PC-9 (cell line): ENCODE measurements at regions of chr1 and their contacts with region 1.

Region 1: GRCh38 chr1:40849801-40850592 is 12.2 kb downstream of the CITED4 start:
- DNase-seq: peak in 1 of 2 experiments; percentile 78
- H3K4me3 ChIP-seq: no peak overlapping the region
- H3K27ac ChIP-seq: no peak overlapping the region
- H3K4me1 ChIP-seq: no peaks in the 10 kb centered on the region
- H3K27me3 ChIP-seq: no peaks in the 10 kb centered on the region
- CTCF ChIP-seq: peak; percentile 93

Region 2: GRCh38 chr1:39842836-39843235 is 1007.2 kb before region 1 on chr1:
- CTCF ChIA-PET with region 1: no interaction called
- POLR2A ChIA-PET with region 1: no interaction called
- intact Hi-C with region 1: no loop called
- DNase-seq: no peak
- H3K4me3 ChIP-seq: no peak overlapping the region
- H3K27ac ChIP-seq: no peak overlapping the region
- H3K4me1 ChIP-seq: no peaks in the 10 kb centered on the region
- H3K27me3 ChIP-seq: no peaks in the 10 kb centered on the region
- CTCF ChIP-seq: no peak

Region 3: DNA sequence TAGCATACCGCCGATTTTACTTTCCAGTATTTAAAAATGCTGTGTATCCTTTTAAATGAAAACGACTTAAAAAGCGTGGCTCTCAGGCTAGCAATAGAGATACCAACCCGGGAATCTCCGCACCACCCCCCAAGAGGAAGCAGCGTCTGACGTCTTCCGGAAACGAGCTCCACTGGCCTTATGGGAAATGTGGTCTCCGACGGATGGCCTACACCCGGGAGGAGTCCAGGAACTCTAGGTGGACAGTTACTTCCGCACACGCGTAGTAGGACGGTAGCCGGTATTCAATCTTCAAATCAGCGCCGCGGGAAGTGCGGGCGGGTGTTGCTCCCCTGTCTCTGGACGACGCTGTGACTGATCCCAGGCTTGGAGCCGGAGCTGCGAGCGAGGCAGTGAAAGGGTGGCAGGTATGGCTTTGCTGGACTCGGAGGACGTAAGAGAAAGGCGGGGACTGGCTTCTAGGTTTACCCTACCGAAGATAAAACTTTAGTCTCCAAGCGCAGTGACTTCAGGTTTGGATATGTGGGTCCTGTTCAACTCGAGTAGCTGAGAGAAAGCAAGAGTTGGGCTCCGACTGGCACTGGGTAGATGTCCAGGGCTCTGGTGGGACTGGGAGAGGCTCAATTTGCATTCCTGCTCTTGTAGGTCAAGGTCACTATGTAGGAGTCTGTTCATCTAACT is 318.5 kb before region 1 on chr1 and contains the start of gene ZNF684:
- CTCF ChIA-PET with region 1: no interaction called
- POLR2A ChIA-PET with region 1: no interaction called
- intact Hi-C with region 1: loop called (anchors 5 kb)
- DNase-seq: peak; percentile 89 to 90
- H3K4me3 ChIP-seq: peak within 1 kb of the TSS; percentile 88
- H3K27ac ChIP-seq: peak within 1 kb of the TSS; percentile 41
- H3K4me1 ChIP-seq: peaks cover 13% of the 10 kb centered on the region
- H3K27me3 ChIP-seq: no peaks in the 10 kb centered on the region
- CTCF ChIP-seq: no peak
- total RNA-seq, gene ZNF684: 6.0 and 11.8 TPM in 2 replicates

Region 4: GRCh38 chr1:40612345-40612831 is 237.6 kb before region 1 on chr1:
- CTCF ChIA-PET with region 1: interaction called, 4 read pairs
- POLR2A ChIA-PET with region 1: no interaction called
- intact Hi-C with region 1: loop called (anchors 1 kb)
- DNase-seq: peak; percentile 40 to 65
- H3K4me3 ChIP-seq: no peak overlapping the region
- H3K27ac ChIP-seq: no peak overlapping the region
- H3K4me1 ChIP-seq: no peaks in the 10 kb centered on the region
- H3K27me3 ChIP-seq: no peaks in the 10 kb centered on the region
- CTCF ChIP-seq: peak; percentile 86

Region 5: GRCh38 chr1:41003640-41004220 is 153.7 kb after region 1 on chr1:
- CTCF ChIA-PET with region 1: interaction called, 3 read pairs
- POLR2A ChIA-PET with region 1: no interaction called
- intact Hi-C with region 1: loop called (anchors 1 kb)
- DNase-seq: peak; percentile 93 to 96
- H3K4me3 ChIP-seq: no peak overlapping the region
- H3K27ac ChIP-seq: no peak overlapping the region
- H3K4me1 ChIP-seq: peaks cover 13% of the 10 kb centered on the region
- H3K27me3 ChIP-seq: no peaks in the 10 kb centered on the region
- CTCF ChIP-seq: peak; percentile 62

Region 6: DNA sequence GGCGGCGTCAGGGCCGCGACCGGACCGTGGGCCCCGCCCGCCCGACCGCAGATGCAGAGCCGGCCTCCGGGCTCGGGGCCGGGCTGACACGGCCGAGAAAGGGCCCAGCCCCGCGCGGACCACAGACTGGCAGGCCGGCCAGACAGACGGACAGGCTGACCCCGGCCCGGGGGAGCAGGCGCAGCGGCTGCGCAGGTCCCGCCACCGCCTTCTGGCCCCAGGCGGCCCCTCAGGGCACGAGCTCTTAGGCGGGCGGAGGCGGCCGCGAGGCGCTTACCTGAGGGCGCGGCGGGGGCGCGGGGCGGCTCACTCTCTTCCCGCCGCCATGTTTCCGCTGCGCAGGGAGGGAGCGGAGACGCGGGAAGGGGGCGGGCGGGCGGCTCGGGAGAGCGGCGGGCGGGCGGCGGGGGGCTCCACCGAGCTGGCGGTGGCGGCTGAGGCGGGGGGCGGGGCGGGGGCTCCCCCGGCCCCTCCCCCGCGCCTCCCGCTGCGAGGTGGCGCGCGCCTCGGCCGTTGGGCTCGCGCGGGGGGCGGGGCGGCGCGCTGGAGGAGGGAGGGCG is 391.9 kb after region 1 on chr1 and contains the start of gene SCMH1:
- CTCF ChIA-PET with region 1: no interaction called
- POLR2A ChIA-PET with region 1: no interaction called
- intact Hi-C with region 1: loop called (anchors 10 kb)
- DNase-seq: peak in 1 of 2 experiments; percentile 59
- H3K4me3 ChIP-seq: peak within 1 kb of the TSS; percentile 65
- H3K27ac ChIP-seq: peak within 1 kb of the TSS; percentile 40; the same call in 1 of the 2 replicates
- H3K4me1 ChIP-seq: peaks cover 41% of the 10 kb centered on the region
- H3K27me3 ChIP-seq: no peaks in the 10 kb centered on the region
- CTCF ChIP-seq: no peak
- total RNA-seq, gene SCMH1: 35.4 and 39.5 TPM in 2 replicates